ENCODE measurements at regions of chr13 and their contacts with region 1.

Region 1: DNA sequence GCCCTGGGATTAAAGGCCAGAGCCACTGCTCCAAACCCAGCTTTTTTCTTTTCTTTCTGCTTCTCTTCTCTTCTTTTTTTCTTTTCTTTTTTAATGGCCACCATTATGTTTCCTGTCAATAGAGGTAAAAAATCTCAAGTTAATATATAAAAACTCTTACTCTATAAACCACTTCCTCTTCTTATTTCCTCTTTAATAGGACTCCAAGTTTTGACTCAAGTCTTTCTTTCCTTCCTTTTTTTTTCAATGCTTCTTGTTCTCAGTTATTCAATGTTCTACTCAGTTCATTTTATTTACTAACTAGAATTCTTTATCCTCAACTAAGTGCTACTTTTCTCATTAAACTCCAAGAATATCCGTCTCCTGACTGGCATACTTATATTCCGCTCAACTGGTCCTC is 27.1 kb upstream of the MYCBP2 start:
- DNase-seq: peak; percentile 55
- ATAC-seq: peak; percentile 70
- H3K4me3 ChIP-seq: peak overlapping the region in 1 of 5 experiments; percentile 26
- H3K4me3 Mint-ChIP-seq: peak overlapping the region; percentile 11
- H3K27ac ChIP-seq: peak overlapping the region; percentile 55 to 82
- H3K27ac Mint-ChIP-seq: peak overlapping the region; percentile 81
- H3K4me1 ChIP-seq: peaks cover 19 to 22% of the 10 kb centered on the region in 2 donors
- H3K4me1 Mint-ChIP-seq: peaks cover 30% of the 10 kb centered on the region
- H3K27me3 ChIP-seq: no peaks in the 10 kb centered on the region
- H3K27me3 Mint-ChIP-seq: no peaks in the 10 kb centered on the region
- CTCF ChIP-seq: no peak

Region 2: DNA sequence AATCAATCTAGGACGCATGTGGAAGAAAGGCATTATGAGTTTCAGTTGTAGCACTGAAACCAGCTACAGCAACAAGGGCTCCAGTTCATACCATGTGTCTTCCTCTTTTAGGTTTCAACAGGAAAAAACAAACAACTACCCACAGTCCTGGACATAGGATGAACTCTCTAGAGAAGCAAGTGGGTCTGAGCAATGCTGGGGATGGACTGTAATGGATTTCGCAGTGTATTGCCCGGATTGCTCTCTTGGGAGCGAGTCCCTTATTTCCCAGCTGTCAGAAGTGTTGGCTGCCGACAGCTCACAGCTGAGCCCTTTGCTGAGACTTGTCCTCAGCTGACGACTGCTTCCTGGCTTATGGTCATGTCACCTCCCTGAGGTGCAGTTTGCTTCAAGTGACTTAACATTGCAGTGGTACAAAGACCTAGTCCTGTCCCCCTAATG is 15.0 kb before region 1 on chr13:
- CTCF ChIA-PET with region 1: interaction called, 3 read pairs
- POLR2A ChIA-PET with region 1: interaction called, 6 read pairs
- intact Hi-C with region 1: loop called (anchors 2 kb)
- DNase-seq: peak; percentile 79
- ATAC-seq: peak; percentile 77
- H3K4me3 ChIP-seq: peak overlapping the region; percentile 32 to 50 (median 45)
- H3K4me3 Mint-ChIP-seq: peak overlapping the region; percentile 72
- H3K27ac ChIP-seq: peak overlapping the region; percentile 91 to 92
- H3K27ac Mint-ChIP-seq: peak overlapping the region; percentile 86
- H3K4me1 ChIP-seq: peaks cover 61 to 65% of the 10 kb centered on the region in 2 donors
- H3K4me1 Mint-ChIP-seq: peaks cover 76% of the 10 kb centered on the region
- H3K27me3 ChIP-seq: no peaks in the 10 kb centered on the region
- H3K27me3 Mint-ChIP-seq: no peaks in the 10 kb centered on the region
- CTCF ChIP-seq: no peak

Measured in B cell (primary cell).